ENCODE measurements at regions of chr3 and their contacts with region 1.

Region 1: GRCh38 chr3:11846281-11847034 is at the start of gene TAMM41:
- DNase-seq: peak; percentile 85
- H3K4me3 Mint-ChIP-seq: peak within 1 kb of the TSS; percentile 97
- H3K27ac Mint-ChIP-seq: peak within 1 kb of the TSS; percentile 90
- H3K4me1 Mint-ChIP-seq: peaks cover 20% of the 10 kb centered on the region
- H3K27me3 Mint-ChIP-seq: peaks cover 3% of the 10 kb centered on the region
- total RNA-seq, gene TAMM41: 28.4 and 30.6 TPM in 2 replicates

Region 2: GRCh38 chr3:10352146-10352911 is 1494.1 kb before region 1 on chr3:
- intact Hi-C with region 1: no loop called
- DNase-seq: no peak
- H3K4me3 Mint-ChIP-seq: no peak overlapping the region
- H3K27ac Mint-ChIP-seq: no peak overlapping the region
- H3K4me1 Mint-ChIP-seq: peaks cover 1% of the 10 kb centered on the region
- H3K27me3 Mint-ChIP-seq: peaks cover 3% of the 10 kb centered on the region

Region 3: DNA sequence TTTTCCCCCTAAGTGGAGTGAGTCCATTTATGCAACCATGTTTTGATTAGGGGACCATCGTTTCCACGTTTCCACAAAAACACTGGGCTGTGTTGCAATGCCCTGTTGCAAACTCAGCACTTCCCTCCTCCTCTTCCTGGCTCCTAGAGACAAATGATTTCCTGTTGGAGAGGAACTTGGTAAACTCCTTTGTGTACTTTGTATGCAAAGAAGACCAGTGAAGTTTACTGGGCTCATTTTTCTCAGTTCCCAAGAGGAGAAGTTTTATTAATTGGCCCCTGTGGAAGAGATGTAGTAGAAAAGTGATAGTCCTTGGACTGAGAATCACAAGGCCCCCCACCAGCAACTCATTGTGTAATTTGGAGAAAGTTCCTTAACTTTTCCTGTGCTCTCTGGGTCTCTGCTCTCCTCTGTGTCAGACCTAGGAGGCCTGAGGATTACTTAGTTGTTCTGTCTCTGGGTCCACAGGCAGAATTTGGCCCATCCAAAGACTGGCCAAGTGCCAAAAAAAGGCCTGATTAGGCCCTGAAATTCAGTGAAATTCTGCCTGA is 479.2 kb before region 1 on chr3:
- intact Hi-C with region 1: loop called (anchors 10 kb)
- DNase-seq: no peak
- H3K4me3 Mint-ChIP-seq: no peak overlapping the region
- H3K27ac Mint-ChIP-seq: no peak overlapping the region
- H3K4me1 Mint-ChIP-seq: peaks cover 31% of the 10 kb centered on the region
- H3K27me3 Mint-ChIP-seq: no peaks in the 10 kb centered on the region

Region 4: GRCh38 chr3:11770477-11771391 is 75.7 kb before region 1 on chr3:
- intact Hi-C with region 1: loop called (anchors 5 kb)
- DNase-seq: peak; percentile 86
- H3K4me3 Mint-ChIP-seq: no peak overlapping the region
- H3K27ac Mint-ChIP-seq: peak overlapping the region; percentile 46
- H3K4me1 Mint-ChIP-seq: peaks cover 26% of the 10 kb centered on the region
- H3K27me3 Mint-ChIP-seq: no peaks in the 10 kb centered on the region

Region 5: GRCh38 chr3:11803977-11804892 is 42.2 kb before region 1 on chr3:
- intact Hi-C with region 1: loop called (anchors 5 kb)
- DNase-seq: peak; percentile 19
- H3K4me3 Mint-ChIP-seq: no peak overlapping the region
- H3K27ac Mint-ChIP-seq: no peak overlapping the region
- H3K4me1 Mint-ChIP-seq: peaks cover 27% of the 10 kb centered on the region
- H3K27me3 Mint-ChIP-seq: no peaks in the 10 kb centered on the region